GM10248 (cell line): ENCODE measurements at regions of chr9 and their contacts with region 1.

Region 1: GRCh38 chr9:34403554-34404380 is 27.1 kb upstream of the MYORG start:
- DNase-seq: peak; percentile 57
- CTCF ChIP-seq: peak; percentile 94

Region 2: GRCh38 chr9:34376596-34377403 is 27.0 kb before region 1 on chr9 and contains the start of gene MYORG:
- CTCF ChIA-PET with region 1: interaction called, 19 read pairs
- POLR2A ChIA-PET with region 1: no interaction called
- DNase-seq: peak; percentile 99
- CTCF ChIP-seq: no peak

Region 3: GRCh38 chr9:34419716-34420504 is 16.1 kb after region 1 on chr9:
- CTCF ChIA-PET with region 1: interaction called, 29 read pairs
- POLR2A ChIA-PET with region 1: no interaction called
- DNase-seq: no peak
- CTCF ChIP-seq: no peak

Region 4: GRCh38 chr9:34443533-34443932 is 39.8 kb after region 1 on chr9:
- CTCF ChIA-PET with region 1: interaction called, 14 read pairs
- POLR2A ChIA-PET with region 1: no interaction called
- DNase-seq: no peak
- CTCF ChIP-seq: no peak

Region 5: GRCh38 chr9:34546834-34547827 is 143.4 kb after region 1 on chr9:
- CTCF ChIA-PET with region 1: interaction called, 22 read pairs
- POLR2A ChIA-PET with region 1: no interaction called
- DNase-seq: peak; percentile 58
- CTCF ChIP-seq: peak; percentile 52

Region 6: DNA sequence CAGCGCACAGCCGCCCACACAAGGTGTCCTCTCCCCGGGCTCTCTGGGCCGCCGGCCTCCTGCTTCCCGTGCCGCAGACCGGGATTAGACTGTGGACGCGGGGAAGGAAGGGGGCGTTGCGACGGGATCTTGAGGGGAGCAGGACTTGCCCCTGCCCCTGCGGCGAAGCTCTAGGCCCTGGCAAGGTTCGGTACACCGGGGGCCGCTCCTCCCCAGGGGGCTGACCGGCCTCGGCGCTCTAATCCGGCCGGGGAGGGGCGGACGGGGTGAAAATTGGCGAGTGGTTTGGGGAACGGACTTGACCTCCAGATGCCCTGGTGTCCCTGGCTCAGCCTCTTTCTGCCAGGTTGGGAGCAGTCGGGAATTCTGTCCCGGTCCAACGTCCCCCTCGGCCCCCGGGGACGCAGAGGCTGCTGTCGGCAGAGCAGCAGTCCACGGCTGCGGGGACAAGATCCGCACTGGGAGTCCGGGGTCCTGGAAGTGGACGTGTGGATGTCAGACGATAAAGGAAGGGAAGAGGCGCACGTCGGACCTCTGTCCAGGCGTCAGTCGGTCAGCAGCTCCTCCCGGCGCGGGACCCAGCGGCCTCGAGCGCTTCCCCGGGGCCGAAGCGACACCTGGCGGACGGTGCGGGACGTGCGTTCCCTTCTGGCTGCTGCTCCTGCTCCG is 187.6 kb after region 1 on chr9:
- CTCF ChIA-PET with region 1: interaction called, 25 read pairs
- POLR2A ChIA-PET with region 1: no interaction called
- DNase-seq: peak; percentile 91
- CTCF ChIP-seq: peak; percentile 95

Region 7: DNA sequence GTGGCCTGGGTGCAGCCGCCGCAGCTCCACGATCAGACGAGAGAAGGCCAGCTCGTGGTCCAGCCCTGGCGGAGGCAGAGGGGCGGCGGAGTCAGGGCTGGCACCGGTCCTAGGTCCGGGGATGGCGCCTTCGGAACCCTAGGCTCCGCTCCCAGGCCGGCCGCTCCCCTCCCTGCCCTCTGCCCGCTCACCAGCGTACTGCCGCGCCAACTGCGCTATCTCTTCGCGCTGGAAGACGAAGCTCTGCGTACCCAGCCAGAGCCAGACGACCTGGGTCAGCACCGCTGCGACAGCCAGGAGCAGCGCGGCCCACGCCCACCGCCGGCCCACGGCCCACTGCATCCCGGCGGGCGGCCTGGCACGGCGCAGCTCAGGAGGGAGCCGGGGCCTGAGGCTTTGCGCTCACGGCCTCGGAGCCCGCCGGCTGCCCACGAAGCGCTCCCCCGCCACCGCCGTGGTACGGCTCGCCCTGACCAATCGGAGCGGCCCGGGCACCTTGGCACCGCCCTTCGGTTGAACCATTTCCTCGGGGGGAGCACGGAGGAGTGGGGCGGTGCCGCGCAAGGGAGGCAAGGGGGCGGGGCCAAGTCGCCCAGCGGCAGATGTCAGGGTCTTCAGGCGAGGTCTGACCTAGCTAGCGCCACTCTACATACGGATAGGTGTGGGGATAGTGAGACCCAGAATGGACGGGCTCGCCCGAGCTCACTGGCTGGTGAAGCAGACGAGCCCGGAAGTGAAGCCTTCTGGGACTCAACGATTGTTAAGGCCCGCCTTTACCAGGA is 233.8 kb after region 1 on chr9 and contains the start of gene SIGMAR1:
- CTCF ChIA-PET with region 1: interaction called, 11 read pairs
- POLR2A ChIA-PET with region 1: no interaction called
- DNase-seq: peak; percentile 93
- CTCF ChIP-seq: no peak